Transverse colon (tissue), 4 donors: ENCODE measurements at regions of chr21 and their contacts with region 1.

Region 1: DNA sequence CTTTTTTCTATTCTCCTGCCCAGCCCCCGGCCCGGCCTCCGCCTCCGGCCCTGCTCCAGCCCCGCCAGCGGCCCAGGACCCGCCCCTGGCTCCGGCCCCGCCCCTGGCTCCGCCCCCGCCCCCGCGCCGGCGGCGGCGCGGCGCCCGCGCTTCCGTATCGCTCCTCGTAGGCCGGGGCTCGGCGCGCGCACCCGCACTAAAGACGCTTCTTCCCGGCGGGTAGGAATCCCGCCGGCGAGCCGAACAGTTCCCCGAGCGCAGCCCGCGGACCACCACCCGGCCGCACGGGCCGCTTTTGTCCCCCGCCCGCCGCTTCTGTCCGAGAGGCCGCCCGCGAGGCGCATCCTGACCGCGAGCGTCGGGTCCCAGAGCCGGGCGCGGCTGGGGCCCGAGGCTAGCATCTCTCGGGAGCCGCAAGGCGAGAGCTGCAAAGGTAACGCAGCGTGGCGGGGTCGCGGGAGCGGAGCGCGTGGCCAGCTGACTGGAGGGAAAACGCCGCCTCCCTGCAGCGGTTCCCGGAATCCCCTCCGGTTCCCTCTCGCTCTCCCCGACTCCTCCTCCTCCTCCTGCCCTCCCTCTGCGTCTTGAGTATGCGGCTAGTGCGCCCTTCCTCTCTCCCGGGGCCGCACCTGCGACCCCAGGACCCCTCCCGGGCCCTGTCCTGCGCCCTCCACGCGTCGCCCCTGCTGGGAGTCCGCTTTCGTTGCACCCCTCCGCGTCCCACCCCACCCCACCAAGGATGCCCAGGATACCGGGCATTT is at the start of gene IFNAR2:
- DNase-seq: peak; percentile 81
- H3K4me3 ChIP-seq: peak within 1 kb of the TSS; percentile 75 to 99 (median 92)
- H3K27ac ChIP-seq: peak within 1 kb of the TSS; percentile 95 to 97 (median 96)
- H3K4me1 ChIP-seq: peaks cover 0 to 30% (median 6%) of the 10 kb centered on the region in 4 donors
- H3K27me3 ChIP-seq: no peaks in the 10 kb centered on the region
- CTCF ChIP-seq: peak in 1 of 5 experiments; percentile 11
- EP300 ChIP-seq: no peak
- POLR2A ChIP-seq: peak; percentile 61
- total RNA-seq, gene IFNAR2: 0.20 to 16.5 (median 5.1) TPM

Region 2: DNA sequence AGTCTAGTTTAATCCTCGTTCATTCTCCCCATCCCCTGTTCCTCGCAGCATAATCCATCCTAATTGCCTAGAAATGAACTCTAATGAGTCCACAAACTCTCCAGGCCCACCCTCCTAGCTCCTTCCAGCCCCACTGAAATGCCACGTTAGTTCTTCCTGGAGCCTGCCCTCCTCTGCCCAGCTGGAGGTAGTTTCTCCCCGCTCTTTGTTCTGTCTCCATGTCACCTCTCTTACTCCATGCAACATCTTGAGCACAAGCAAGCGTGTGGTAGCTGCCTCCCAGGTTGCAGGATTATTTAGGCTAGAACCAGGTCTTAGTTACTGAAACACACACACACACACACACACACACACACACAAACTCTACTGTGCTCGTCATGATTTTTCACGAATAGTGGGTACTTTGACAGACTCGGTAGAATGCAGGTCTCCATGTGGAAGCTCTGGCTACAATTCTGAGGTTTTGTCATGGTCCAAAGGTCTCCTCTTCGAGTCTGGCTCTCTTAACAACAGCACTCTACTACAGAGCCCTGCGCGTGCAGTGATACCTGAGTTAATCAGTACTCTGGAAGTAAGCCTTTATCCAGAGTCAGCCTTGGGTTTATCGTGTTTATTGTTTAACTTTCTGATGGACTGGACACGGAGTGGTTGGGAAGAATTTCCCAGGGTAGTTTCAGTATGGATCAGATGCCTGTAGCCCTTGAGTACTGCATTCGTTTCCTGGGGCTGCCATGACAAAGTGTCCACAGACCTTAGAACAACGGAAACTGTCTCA is 1329.7 kb before region 1 on chr21:
- in situ Hi-C with region 1: no loop called
- intact Hi-C with region 1: no loop called
- DNase-seq: peak; percentile 75
- H3K4me3 ChIP-seq: no peak overlapping the region
- H3K27ac ChIP-seq: peak overlapping the region; percentile 71 to 82 (median 80)
- H3K4me1 ChIP-seq: peaks cover 0 to 29% (median 24%) of the 10 kb centered on the region in 4 donors
- H3K27me3 ChIP-seq: no peaks in the 10 kb centered on the region
- CTCF ChIP-seq: no peak
- EP300 ChIP-seq: no peak
- POLR2A ChIP-seq: peak; percentile 39

Region 3: DNA sequence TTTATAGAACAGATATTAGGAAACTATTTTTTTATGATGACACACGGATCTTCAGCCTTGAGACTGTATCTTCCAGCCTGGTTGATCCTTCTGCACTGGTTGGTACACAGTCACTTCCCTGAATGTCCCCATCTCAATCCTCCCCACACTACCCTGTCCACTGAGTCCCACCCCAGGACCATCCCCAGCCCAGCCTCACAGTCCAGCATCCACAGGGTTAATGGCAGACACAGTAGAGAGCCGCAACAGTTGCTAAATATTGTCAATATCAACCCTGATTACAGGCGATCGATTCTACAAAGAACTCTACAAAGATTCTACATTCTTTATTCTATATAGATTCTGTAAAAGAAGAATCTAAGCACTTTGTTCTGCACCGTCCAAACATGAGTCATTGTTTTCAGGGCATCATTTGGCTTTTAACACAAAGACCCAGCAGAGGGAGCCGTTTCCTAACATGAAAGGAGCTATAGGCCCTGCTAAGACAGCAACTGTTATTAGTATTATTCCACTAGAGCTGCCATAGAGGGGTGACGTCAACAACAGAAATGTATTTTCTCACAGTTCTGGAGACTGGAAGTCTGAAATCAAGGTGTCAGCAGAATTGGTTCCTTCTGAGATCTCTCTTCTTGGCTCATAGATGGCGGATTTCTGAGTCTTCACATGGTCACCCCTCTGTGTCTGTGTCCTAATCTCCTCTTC is 30.3 kb before region 1 on chr21:
- in situ Hi-C with region 1: no loop called
- intact Hi-C with region 1: no loop called
- DNase-seq: peak; percentile 86
- H3K4me3 ChIP-seq: no peak overlapping the region
- H3K27ac ChIP-seq: peak overlapping the region; percentile 19 to 52 (median 36)
- H3K4me1 ChIP-seq: peaks cover 0 to 26% (median 14%) of the 10 kb centered on the region in 4 donors
- H3K27me3 ChIP-seq: no peaks in the 10 kb centered on the region
- CTCF ChIP-seq: peak; percentile 69 to 86 (median 79)
- EP300 ChIP-seq: no peak
- POLR2A ChIP-seq: no peak

Region 4: GRCh38 chr21:33266050-33266788 is 36.3 kb after region 1 on chr21 and contains the start of gene IL10RB:
- in situ Hi-C with region 1: no loop called
- intact Hi-C with region 1: loop called (anchors 5 kb)
- DNase-seq: peak; percentile 87
- H3K4me3 ChIP-seq: peak within 1 kb of the TSS; percentile 57 to 97 (median 72)
- H3K27ac ChIP-seq: peak within 1 kb of the TSS; percentile 85 to 97 (median 92)
- H3K4me1 ChIP-seq: peaks cover 13 to 42% (median 37%) of the 10 kb centered on the region in 4 donors
- H3K27me3 ChIP-seq: no peaks in the 10 kb centered on the region
- CTCF ChIP-seq: no peak
- EP300 ChIP-seq: no peak
- POLR2A ChIP-seq: peak; percentile 76
- total RNA-seq, gene IL10RB: 15.7 to 104 (median 63.2) TPM